ENCODE measurements at regions of chr10 and their contacts with region 1.

Region 1: GRCh38 chr10:98467506-98468346 is 21.0 kb upstream of the HPS1 start:
- DNase-seq: peak; percentile 67
- ATAC-seq: peak; percentile 99
- H3K4me3 ChIP-seq: peak overlapping the region; percentile 40 to 66
- H3K27ac ChIP-seq: no peak overlapping the region
- H3K4me1 ChIP-seq: peaks cover 4% of the 10 kb centered on the region; the same call in 1 of the 2 replicates
- H3K27me3 ChIP-seq: peaks cover 25% of the 10 kb centered on the region
- CTCF ChIP-seq: peak; percentile 92

Region 2: DNA sequence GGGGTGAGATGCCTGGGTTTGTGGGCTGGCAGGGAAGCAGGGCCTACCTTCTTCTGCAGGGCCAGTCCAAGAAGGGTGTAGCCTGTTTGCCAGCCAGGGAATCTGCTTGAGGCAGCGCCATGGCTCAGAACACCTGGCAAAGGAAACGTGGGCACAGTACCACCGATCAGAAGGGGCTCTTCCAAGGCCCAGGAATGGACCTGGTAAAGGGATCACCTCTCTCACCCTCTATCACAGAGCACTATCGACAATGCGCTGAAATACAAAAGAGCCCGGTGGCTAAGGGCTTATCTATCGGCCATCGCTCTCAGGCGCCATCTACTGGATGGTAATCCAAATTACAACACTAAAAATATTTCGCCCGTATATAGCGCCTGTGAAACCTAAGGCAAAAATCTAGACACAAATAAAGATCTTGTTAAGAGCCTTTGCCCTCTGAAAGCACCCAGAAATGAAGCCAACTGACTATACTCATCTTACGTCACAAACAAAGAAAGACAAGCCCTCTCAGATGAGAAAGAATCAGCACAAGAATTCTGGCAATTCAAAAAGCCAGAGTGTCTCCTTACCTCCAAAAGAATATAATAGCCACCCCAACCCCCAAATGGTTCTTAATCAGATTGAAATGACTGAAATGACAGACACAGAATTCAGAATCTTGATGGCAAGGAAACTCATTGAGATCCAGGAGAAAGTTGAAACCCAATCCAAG is 196.8 kb after region 1 on chr10:
- CTCF ChIA-PET with region 1: interaction called, 6 read pairs
- POLR2A ChIA-PET with region 1: no interaction called
- in situ Hi-C with region 1: no loop called
- intact Hi-C with region 1: loop called (anchors 1 kb)
- DNase-seq: peak; percentile 15
- ATAC-seq: peak; percentile 82
- H3K4me3 ChIP-seq: no peak overlapping the region
- H3K27ac ChIP-seq: no peak overlapping the region
- H3K4me1 ChIP-seq: no peaks in the 10 kb centered on the region
- H3K27me3 ChIP-seq: no peaks in the 10 kb centered on the region
- CTCF ChIP-seq: peak; percentile 91

Region 3: DNA sequence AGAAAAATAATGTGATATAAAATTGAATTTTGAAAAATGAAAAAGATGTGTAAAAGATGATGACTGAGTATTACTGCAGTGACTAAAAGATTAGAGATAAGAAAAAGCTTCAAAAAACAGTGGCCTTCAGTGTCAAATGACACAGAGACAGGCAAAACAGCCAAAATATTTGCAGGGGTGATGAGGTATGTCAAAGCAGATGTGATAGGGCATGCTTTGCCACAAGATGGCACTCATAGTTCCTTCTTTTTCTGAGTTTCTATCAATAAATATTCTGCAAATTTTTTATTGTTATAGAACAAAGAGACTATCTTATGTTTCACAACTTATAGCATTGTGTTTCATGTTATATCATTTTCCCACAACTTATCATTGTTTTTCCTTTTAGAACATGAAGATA is 323.1 kb after region 1 on chr10:
- CTCF ChIA-PET with region 1: no interaction called
- POLR2A ChIA-PET with region 1: no interaction called
- in situ Hi-C with region 1: no loop called
- intact Hi-C with region 1: no loop called
- DNase-seq: no peak
- ATAC-seq: no peak
- H3K4me3 ChIP-seq: no peak overlapping the region
- H3K27ac ChIP-seq: no peak overlapping the region
- H3K4me1 ChIP-seq: no peaks in the 10 kb centered on the region
- H3K27me3 ChIP-seq: peaks cover 6% of the 10 kb centered on the region
- CTCF ChIP-seq: peak; percentile 55; the same call in 1 of the 2 replicates

Region 4: DNA sequence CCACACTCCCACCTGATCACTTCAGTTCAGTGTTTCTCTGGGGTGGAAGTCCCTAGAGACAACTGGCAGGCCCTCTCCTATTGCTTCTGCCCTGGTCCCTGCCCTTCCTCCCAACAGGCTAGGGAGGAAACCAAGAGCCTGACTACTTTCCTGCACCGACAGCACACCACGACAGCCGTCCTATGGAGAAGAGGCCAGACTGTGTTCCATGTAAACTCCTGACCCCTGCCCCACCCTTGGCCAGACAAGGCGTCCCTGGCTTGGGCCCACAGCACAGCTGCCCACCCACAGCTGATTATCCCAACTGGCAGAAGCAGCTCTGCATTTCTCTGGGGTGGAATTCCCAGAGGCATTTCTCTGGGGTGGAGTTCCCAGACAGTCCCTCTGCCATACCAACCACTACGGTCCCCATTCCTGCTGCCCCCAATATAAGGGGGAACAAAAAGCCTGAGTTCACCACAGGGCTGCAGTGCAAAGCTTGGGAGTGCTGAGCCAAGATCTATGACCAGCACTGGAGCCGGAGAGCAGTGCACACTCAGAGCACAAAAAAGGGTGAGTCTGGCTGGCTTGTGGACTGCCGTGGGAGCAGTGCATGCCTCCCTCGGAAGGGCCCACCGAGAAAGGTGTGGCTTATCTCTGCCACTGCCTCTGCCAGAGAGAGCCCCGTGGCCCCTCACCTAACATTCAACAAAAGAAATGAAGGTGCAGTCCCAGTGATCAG is 574.5 kb after region 1 on chr10:
- CTCF ChIA-PET with region 1: no interaction called
- POLR2A ChIA-PET with region 1: no interaction called
- in situ Hi-C with region 1: no loop called
- intact Hi-C with region 1: loop called (anchors 2 kb)
- DNase-seq: no peak
- ATAC-seq: no peak; the same call in 1 of the 2 replicates
- H3K4me3 ChIP-seq: no peak overlapping the region
- H3K27ac ChIP-seq: no peak overlapping the region
- H3K4me1 ChIP-seq: no peaks in the 10 kb centered on the region
- H3K27me3 ChIP-seq: no peaks in the 10 kb centered on the region; the same call in none of the 2 replicates
- CTCF ChIP-seq: no peak

Region 5: DNA sequence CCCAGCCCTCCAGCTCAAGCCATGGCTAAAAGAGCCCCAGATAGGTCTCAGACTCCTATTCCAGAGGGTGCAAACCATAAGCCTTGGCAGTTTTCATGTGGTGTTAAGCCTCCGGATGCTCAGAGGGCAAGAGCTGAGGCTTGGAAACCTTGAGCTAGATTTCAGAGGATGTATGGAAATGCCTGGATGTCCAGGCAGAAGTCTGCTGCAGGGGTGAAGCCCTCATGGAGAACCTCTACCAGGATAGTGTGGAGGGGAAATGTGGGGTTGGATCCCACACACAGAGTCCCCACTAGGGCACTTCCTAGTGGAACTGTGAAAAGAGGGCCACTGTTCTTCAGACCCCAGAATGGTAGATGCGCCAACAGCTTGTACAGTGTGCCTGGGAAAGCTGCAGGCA is 781.1 kb after region 1 on chr10:
- CTCF ChIA-PET with region 1: interaction called, 10 read pairs
- POLR2A ChIA-PET with region 1: no interaction called
- in situ Hi-C with region 1: no loop called
- intact Hi-C with region 1: loop called (anchors 2 kb)
- DNase-seq: no peak
- ATAC-seq: no peak
- H3K4me3 ChIP-seq: no peak overlapping the region
- H3K27ac ChIP-seq: no peak overlapping the region
- H3K4me1 ChIP-seq: no peaks in the 10 kb centered on the region
- H3K27me3 ChIP-seq: no peaks in the 10 kb centered on the region
- CTCF ChIP-seq: no peak

Region 6: DNA sequence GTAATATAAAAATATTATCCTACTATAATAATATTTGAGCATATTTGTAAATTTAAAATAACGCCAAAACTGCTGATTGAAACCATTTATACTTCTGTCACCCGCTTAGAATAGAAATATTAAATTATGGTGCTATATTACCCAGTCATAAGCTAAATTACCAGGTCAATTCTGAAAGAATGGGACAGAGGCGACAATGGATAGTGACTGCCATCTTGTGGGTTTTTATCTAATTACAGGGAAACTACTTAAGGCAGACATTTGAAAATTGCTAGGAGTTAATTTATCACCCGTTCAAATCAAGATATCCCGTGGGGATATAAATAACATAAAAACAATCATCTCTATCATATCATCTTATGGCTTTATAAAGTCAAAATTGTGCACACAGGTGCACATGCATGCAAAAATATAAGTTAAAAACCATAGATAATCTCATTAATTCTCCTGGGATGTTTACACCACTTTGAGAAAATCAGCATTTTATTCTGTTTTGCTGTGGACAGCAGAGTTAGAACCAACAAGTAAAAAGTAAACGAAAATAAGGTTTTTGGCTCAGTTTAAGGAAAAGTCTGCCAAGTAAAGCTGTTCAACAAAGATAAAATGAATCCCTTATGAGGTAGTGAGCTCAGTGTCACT is 809.2 kb after region 1 on chr10:
- CTCF ChIA-PET with region 1: interaction called, 4 read pairs
- POLR2A ChIA-PET with region 1: no interaction called
- in situ Hi-C with region 1: no loop called
- intact Hi-C with region 1: loop called (anchors 2 kb)
- DNase-seq: peak; percentile 22
- ATAC-seq: peak; percentile 73; the same call in 1 of the 2 replicates
- H3K4me3 ChIP-seq: no peak overlapping the region
- H3K27ac ChIP-seq: no peak overlapping the region
- H3K4me1 ChIP-seq: no peaks in the 10 kb centered on the region
- H3K27me3 ChIP-seq: peaks cover 7% of the 10 kb centered on the region; the same call in 1 of the 2 replicates
- CTCF ChIP-seq: peak; percentile 80; the same call in 1 of the 2 replicates

Measured in Panc1 (cell line).